T-cell (primary cell): ENCODE measurements at regions of chr11 and their contacts with region 1.

Region 1: GRCh38 chr11:33045551-33046255 is 6.3 kb downstream of the TCP11L1 start:
- DNase-seq: no peak
- ATAC-seq: no peak
- H3K4me3 ChIP-seq: no peak overlapping the region
- H3K4me3 Mint-ChIP-seq: no peak overlapping the region
- H3K27ac ChIP-seq: no peak overlapping the region
- H3K27ac Mint-ChIP-seq: no peak overlapping the region
- H3K4me1 ChIP-seq: peaks cover 0 to 3% of the 10 kb centered on the region in 2 experiments
- H3K4me1 Mint-ChIP-seq: peaks cover 4 to 8% (median 7%) of the 10 kb centered on the region in 3 donors
- H3K27me3 ChIP-seq: no peaks in the 10 kb centered on the region
- H3K27me3 Mint-ChIP-seq: no peaks in the 10 kb centered on the region

Region 2: GRCh38 chr11:33015621-33016551 is 29.8 kb before region 1 on chr11 and contains the start of gene DEPDC7:
- CTCF ChIA-PET with region 1: no interaction called
- POLR2A ChIA-PET with region 1: interaction called in 1 of 2 experiments, 13 read pairs
- DNase-seq: peak; percentile 50 to 84 (median 74)
- ATAC-seq: peak; percentile 77 to 82 (median 78)
- H3K4me3 ChIP-seq: peak within 1 kb of the TSS; percentile 21 to 58
- H3K4me3 Mint-ChIP-seq: peak within 1 kb of the TSS; percentile 81 to 86 (median 82)
- H3K27ac ChIP-seq: no peak within 1 kb of the TSS
- H3K27ac Mint-ChIP-seq: peak within 1 kb of the TSS in 1 of 2 donors; percentile 52
- H3K4me1 ChIP-seq: peaks cover 16 to 30% of the 10 kb centered on the region in 2 experiments
- H3K4me1 Mint-ChIP-seq: peaks cover 31 to 51% (median 46%) of the 10 kb centered on the region in 3 donors
- H3K27me3 ChIP-seq: peaks cover 0 to 17% of the 10 kb centered on the region in 2 experiments
- H3K27me3 Mint-ChIP-seq: peaks cover 0 to 29% of the 10 kb centered on the region in 2 donors
- total RNA-seq, gene DEPDC7: 2.1 to 5.3 (median 2.5) TPM

Region 3: DNA sequence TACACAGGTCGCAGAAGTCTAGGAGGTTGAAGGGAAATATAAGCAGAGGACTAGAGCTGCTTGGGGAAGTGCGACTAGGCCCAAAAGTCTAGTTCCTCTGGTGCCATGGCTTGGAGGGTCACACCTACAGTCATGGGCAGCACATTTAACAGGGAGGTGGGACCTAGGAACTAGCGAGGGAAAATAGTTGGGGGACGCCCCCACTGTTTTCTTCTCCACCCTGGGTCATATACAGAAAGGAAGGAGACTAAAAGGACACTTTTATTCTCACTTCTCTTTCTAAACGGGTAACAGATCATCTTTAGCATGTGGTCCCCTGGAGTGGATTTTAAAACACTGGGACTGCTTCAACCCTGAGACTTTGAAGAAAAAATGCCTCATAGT is 1853.9 kb after region 1 on chr11:
- CTCF ChIA-PET with region 1: no interaction called
- POLR2A ChIA-PET with region 1: no interaction called
- DNase-seq: no peak
- ATAC-seq: no peak
- H3K4me3 ChIP-seq: peak overlapping the region in 1 of 2 donors; percentile 8
- H3K4me3 Mint-ChIP-seq: no peak overlapping the region
- H3K27ac ChIP-seq: no peak overlapping the region
- H3K27ac Mint-ChIP-seq: no peak overlapping the region
- H3K4me1 ChIP-seq: no peaks in the 10 kb centered on the region
- H3K4me1 Mint-ChIP-seq: peaks cover 4 to 9% (median 4%) of the 10 kb centered on the region in 3 donors
- H3K27me3 ChIP-seq: no peaks in the 10 kb centered on the region
- H3K27me3 Mint-ChIP-seq: no peaks in the 10 kb centered on the region